Activated naive CD4-positive, alpha-beta T cell treated with anti-CD3 and anti-CD28 coated beads, Interleukin-2, amount 10 ng/mL, durations not matched to agents 7 days and 5 days (primary cell): ENCODE measurements at regions of chr11 and their contacts with region 1.

Region 1: DNA sequence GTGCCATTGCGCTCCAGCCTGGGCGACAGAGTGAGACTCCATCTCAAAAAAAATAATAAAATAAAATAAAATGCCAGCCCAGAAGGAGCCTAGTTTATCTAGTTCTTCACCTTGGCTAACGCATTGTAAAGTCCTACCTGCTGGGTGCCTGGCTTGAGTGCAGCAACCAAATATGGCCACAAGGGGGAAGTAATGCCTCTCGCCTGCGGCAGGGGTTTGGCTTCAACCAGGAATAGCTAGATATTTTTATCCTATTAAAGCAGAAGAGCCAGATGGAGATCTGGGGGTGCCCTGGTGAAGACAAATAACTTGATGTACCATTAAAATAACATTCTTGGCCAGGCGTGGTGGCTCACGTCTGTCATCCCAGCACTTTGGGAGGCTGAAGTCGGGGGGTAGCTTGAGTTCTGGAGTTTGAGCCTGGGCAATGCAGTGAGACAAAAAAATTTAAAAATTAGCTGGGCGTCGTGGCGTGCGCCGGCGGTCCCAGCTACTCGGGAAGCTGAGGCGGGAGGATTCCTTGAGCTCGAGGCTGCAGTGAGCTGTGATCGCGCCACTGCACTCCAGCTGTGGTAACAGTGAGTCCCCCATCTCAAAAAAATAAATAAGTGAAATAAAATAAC is 20.6 kb upstream of the PLEKHB1 start:
- DNase-seq: peak; percentile 78
- H3K4me3 Mint-ChIP-seq: no peak overlapping the region
- H3K27ac Mint-ChIP-seq: no peak overlapping the region
- H3K4me1 Mint-ChIP-seq: peaks cover 3% of the 10 kb centered on the region
- H3K27me3 Mint-ChIP-seq: peaks cover 55% of the 10 kb centered on the region

Region 2: DNA sequence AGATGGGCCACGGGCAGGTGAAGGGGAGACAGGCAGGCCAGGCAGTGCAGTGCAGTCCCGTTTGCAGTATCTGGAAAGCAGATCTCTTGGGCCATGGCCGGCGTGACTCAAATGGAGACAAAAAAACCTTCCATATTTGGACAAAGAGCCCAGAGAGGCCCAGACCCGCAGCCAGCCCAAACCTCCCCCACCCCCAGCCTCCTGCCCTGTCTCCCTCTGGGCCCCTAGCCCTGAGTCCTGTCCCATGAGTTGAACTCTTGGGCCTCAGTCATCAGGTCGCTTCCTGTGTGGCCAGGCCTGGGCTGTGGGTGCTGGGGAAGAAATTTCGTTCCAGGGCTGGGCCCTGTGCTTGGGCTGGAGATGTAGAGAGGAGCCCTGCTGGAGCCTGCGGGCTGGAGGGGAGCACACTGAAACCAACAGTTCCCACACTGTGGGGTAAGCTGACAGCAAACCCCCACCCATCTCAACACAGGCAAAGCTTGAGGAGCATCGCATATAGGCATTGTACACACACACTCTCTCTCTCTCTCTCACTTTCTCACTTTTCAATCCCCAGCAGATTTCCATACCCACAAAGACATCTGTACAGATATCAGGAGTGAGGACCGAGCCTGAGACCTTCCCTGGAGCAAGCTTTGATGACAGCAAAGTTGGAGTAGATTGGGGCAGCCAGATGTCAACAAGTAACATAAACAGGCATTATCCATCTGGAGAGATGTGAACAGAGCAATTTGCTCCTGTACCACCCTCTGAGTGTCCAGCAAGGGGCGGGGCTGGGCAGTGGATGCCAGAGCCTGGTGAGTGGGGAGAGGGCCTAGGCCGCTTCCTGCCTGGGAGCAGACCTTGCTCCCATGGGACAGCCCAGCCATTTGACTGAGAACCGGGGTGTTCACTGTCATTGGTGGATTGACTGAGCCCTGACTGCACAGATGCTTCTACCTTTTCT is 300.5 kb before region 1 on chr11:
- CTCF ChIA-PET with region 1: no interaction called
- DNase-seq: no peak
- H3K4me3 Mint-ChIP-seq: no peak overlapping the region
- H3K27ac Mint-ChIP-seq: no peak overlapping the region
- H3K4me1 Mint-ChIP-seq: peaks cover 2% of the 10 kb centered on the region
- H3K27me3 Mint-ChIP-seq: peaks cover 33% of the 10 kb centered on the region

Region 3: GRCh38 chr11:73478738-73479347 is 147.0 kb before region 1 on chr11:
- CTCF ChIA-PET with region 1: interaction called, 14 read pairs
- DNase-seq: no peak
- H3K4me3 Mint-ChIP-seq: no peak overlapping the region
- H3K27ac Mint-ChIP-seq: no peak overlapping the region
- H3K4me1 Mint-ChIP-seq: no peaks in the 10 kb centered on the region
- H3K27me3 Mint-ChIP-seq: no peaks in the 10 kb centered on the region

Region 4: DNA sequence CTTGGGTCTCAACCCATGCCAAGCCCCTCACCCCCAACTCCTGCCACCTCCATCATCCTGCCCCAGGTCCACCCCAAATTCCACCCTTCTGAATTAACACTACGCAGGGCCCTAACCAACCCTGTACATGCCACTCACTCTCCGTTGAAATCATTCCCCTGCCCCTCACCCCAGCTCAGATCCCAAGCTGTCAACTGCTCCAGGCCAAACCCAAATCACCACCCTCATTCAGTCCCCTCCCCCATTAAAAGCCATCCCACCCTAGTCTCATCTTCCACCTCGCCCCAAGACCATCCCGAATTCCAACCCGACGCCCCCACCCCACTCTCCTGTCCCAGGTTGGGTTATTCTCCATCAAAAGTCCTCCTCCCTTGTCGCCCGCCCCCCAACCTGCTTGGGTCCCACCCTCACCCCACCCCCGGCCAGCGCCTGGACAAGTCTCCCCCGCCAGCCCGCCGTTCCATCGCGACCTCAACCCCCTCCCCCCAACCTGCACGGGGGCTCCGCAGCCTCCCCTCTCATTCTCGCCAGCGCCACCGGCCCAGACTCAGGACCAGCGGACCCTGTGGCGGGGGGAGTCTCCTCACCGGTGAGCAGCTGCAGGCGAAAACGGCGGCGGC is 28.4 kb before region 1 on chr11:
- CTCF ChIA-PET with region 1: no interaction called
- DNase-seq: no peak
- H3K4me3 Mint-ChIP-seq: peak overlapping the region; percentile 91
- H3K27ac Mint-ChIP-seq: peak overlapping the region; percentile 96
- H3K4me1 Mint-ChIP-seq: peaks cover 41% of the 10 kb centered on the region
- H3K27me3 Mint-ChIP-seq: peaks cover 17% of the 10 kb centered on the region

Region 5: DNA sequence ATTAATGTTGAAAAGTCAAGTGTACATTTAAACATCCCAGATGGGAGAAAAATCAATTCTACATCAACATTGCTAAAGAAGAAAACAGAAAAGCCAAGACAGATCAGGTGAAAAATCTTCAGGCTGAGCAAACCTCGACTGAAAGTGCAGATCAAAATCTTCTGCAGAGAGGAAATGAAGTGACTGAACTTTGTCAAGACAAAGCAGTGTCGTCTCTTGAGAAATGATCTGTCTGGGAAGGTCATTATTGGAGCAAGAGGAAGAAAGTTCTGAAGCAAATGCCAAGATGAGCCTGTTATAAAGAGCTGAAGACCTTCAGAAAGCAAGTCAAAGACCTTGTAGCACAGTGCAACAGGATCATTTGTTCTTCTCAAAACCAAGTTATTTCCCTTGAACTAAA is 14.8 kb after region 1 on chr11:
- CTCF ChIA-PET with region 1: interaction called, 11 read pairs
- DNase-seq: no peak
- H3K4me3 Mint-ChIP-seq: no peak overlapping the region
- H3K27ac Mint-ChIP-seq: no peak overlapping the region
- H3K4me1 Mint-ChIP-seq: peaks cover 6% of the 10 kb centered on the region
- H3K27me3 Mint-ChIP-seq: peaks cover 3% of the 10 kb centered on the region

Region 6: DNA sequence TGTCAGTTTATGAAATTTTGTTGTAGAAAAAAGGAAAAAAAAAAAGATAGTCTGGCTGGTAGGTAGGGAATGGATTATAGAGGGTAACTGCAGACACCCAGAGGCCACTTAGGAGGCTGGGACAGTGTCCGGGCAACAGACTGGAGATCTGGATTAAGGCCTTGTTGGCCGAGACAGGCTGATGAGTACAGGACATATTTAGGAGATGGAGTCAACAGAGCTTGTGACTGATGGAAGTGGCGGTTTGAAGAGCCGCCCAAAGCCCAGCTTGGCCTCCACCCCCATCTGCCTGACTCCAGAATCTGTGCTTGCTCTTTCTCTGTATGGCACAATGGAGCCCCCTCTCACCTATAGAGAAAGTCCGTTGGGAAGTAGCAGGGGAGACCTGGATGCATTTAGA is 28.2 kb after region 1 on chr11:
- CTCF ChIA-PET with region 1: interaction called, 144 read pairs
- DNase-seq: no peak
- H3K4me3 Mint-ChIP-seq: no peak overlapping the region
- H3K27ac Mint-ChIP-seq: no peak overlapping the region
- H3K4me1 Mint-ChIP-seq: no peaks in the 10 kb centered on the region
- H3K27me3 Mint-ChIP-seq: peaks cover 6% of the 10 kb centered on the region

Region 7: GRCh38 chr11:73931039-73931645 is 305.3 kb after region 1 on chr11:
- CTCF ChIA-PET with region 1: interaction called, 13 read pairs
- DNase-seq: peak; percentile 47
- H3K4me3 Mint-ChIP-seq: no peak overlapping the region
- H3K27ac Mint-ChIP-seq: no peak overlapping the region
- H3K4me1 Mint-ChIP-seq: no peaks in the 10 kb centered on the region
- H3K27me3 Mint-ChIP-seq: no peaks in the 10 kb centered on the region